Endothelial cell of umbilical vein (primary cell): ENCODE measurements at regions of chr10 and their contacts with region 1.

Region 1: DNA sequence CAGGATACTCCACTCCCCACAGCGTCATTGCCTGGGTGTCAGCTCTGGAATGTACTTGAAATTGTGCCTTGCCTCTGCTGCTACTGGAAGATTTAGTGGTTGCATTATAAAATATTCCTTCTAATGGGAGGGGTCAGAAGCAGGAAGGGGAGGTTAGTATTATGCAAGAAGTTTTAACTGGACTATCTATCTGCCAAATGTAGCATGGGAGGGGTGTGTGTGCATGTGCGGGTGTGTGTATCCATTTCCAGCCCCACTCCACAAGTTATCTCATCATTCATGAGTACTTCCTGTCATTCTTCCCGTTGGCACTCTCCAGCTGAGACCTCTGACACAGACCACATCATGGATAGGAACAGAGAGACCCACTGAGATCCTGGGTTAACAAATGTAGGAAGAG is 13.4 kb downstream of the MBL2 start:
- DNase-seq: no peak
- H3K4me3 ChIP-seq: no peak overlapping the region
- H3K27ac ChIP-seq: no peak overlapping the region
- H3K4me1 ChIP-seq: no peaks in the 10 kb centered on the region
- H3K27me3 ChIP-seq: peaks cover 7 to 21% of the 10 kb centered on the region in 2 experiments
- CTCF ChIP-seq: no peak
- POLR2A ChIP-seq: no peak

Region 2: DNA sequence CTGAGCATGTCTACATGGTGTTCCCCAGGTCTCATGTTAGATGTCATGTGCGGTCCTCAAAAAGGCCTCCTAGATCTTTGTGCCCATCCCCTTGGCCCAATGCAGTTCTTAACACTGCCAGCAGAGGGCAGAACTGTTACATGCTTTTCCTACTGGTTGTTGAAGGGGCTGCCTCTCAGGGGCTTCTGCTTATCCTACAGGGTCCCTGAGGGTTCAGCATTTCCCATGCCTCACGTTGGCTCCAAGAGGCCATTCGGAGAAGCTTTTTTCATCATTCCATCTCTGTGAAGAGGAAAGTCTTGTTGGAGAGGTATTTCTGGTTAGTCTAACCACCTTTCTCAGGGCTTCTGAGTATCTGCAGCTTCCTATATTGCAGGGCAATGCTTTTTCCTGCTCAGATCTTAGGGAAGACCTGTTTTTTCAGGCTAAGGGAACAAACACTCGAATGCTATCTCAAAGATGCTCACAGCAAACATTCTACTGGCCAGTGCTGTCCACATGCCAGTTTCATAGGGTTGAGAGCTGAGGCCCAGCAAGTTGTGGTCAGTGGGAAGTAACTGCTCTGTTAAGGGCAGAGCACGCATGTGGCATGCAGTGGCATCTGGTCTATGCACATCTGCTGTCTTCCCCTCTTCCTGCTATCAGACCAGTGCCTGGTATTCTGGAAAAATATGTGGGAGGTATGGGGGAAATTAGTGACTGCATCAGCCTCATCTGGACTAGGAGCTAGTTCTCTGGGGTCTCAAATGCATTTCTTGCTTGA is 18.1 kb before region 1 on chr10:
- CTCF ChIA-PET with region 1: interaction called, 12 read pairs
- POLR2A ChIA-PET with region 1: no interaction called
- dilution Hi-C with region 1: no loop called
- intact Hi-C with region 1: no loop called
- DNase-seq: peak; percentile 52
- H3K4me3 ChIP-seq: no peak overlapping the region
- H3K27ac ChIP-seq: no peak overlapping the region
- H3K4me1 ChIP-seq: no peaks in the 10 kb centered on the region
- H3K27me3 ChIP-seq: no peaks in the 10 kb centered on the region
- CTCF ChIP-seq: peak; percentile 85 to 90
- POLR2A ChIP-seq: no peak